GM18951 (cell line): ENCODE measurements at regions of chr9 and their contacts with region 1.

Region 1: DNA sequence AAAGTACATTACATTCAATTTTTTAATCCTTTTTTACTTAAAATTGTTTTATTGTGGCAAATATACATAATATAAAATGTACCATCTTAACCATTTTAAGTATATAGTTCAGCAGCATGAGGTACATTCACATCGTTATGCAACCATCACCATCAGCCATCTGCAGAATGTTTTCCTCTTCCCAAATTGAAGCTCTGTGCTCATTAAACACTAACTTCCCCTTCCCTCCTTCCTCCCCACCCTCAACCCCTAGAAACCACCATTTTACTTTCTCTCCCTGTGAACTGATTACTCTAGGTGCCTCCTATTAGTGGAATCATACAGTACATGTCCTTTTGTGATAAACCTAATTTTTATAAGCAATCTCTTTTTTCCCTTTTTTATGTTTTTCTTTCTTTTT is 15.6 kb downstream of the TEX53 start:
- POLR2A ChIP-seq: no peak

Region 2: GRCh38 chr9:114413861-114414301 is 228.1 kb before region 1 on chr9:
- in situ Hi-C with region 1: loop called (anchors 10 kb)
- POLR2A ChIP-seq: no peak

Region 3: GRCh38 chr9:114452219-114453165 is 189.5 kb before region 1 on chr9:
- in situ Hi-C with region 1: no loop called
- POLR2A ChIP-seq: no peak